Dorsolateral prefrontal cortex (tissue), 120 donors: ENCODE measurements at regions of chr14 and their contacts with region 1.

Region 1: DNA sequence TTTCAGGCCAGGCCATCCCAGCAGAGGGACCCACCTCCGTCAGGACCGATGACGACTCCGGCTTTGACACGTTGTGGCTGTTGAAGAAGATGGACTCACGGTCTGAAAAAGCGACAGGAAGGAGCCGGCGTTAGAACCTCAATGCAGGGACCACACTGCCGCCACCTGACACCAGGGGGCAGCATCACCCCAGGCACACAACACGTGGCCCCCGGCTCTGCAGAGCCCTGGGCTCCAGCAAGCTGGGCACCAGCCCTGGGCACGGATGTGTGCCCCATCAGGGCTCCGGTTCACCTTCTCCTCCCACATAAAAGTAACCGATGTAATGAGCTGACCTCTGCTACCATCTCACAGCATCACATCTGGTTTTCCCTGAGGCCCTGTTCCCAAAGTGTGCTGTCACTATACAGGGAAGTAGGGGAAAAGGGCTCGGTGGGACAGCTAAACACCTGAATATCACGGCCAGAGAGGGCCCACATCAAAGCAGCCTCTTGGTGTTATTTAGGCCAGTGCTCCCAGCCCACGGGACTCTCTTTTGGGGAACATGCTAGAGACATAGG is 29.0 kb downstream of the CHGA start:
- DNase-seq: peak; percentile 82 to 93 (median 88)
- H3K4me3 ChIP-seq: peak overlapping the region in 5 of 59 donors; percentile 4 to 18 (median 11)
- H3K27ac ChIP-seq: peak overlapping the region; percentile 10 to 99 (median 93)
- H3K27me3 ChIP-seq: no peaks in the 10 kb centered on the region
- CTCF ChIP-seq: peak; percentile 82 to 100 (median 98)

Region 2: GRCh38 chr14:92568621-92569479 is 383.1 kb before region 1 on chr14:
- intact Hi-C with region 1: no loop called
- DNase-seq: no peak
- H3K4me3 ChIP-seq: no peak overlapping the region
- H3K27ac ChIP-seq: no peak overlapping the region
- H3K27me3 ChIP-seq: no peaks in the 10 kb centered on the region
- CTCF ChIP-seq: no peak

Region 3: GRCh38 chr14:93029911-93030542 is 78.0 kb after region 1 on chr14:
- intact Hi-C with region 1: loop called in 1 of 2 experiments (anchors 2 kb)
- DNase-seq: peak in 6 of 10 donors; percentile 61 to 83 (median 76)
- H3K4me3 ChIP-seq: peak overlapping the region in 2 of 59 donors; percentile 28 to 36
- H3K27ac ChIP-seq: peak overlapping the region in 56 of 59 donors; percentile 15 to 100 (median 96)
- H3K27me3 ChIP-seq: no peaks in the 10 kb centered on the region
- CTCF ChIP-seq: no peak

Region 4: GRCh38 chr14:93049867-93050331 is 97.9 kb after region 1 on chr14:
- intact Hi-C with region 1: loop called in 1 of 2 experiments (anchors 5 kb)
- DNase-seq: no peak
- H3K4me3 ChIP-seq: no peak overlapping the region
- H3K27ac ChIP-seq: peak overlapping the region in 39 of 59 donors; percentile 4 to 99 (median 36)
- H3K27me3 ChIP-seq: no peaks in the 10 kb centered on the region
- CTCF ChIP-seq: peak in 1 of 56 donors; percentile 6

Region 5: DNA sequence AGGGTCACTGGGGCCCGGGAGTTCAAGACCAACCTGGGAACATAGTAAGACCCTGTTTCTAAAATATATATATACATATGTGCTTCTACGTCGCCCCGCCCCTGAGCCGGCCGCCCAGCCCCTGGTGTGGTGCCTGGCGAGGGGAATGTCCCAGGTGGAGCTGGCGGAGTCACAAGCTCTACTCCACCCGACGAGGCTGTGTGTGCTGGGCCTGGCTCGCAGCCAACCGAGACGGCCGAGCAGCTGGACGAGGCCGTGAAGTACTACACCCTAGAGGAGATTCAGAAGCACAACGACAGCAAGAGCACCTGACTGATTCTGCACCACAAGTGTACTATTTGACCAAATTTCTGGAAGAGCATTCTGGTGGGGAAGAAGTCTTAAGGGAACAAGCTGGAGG is 185.9 kb after region 1 on chr14:
- intact Hi-C with region 1: loop called in 1 of 2 experiments (anchors 1 kb)
- DNase-seq: no peak
- H3K4me3 ChIP-seq: no peak overlapping the region
- H3K27ac ChIP-seq: no peak overlapping the region
- H3K27me3 ChIP-seq: no peaks in the 10 kb centered on the region
- CTCF ChIP-seq: no peak